ENCODE measurements at regions of chr17 and their contacts with region 1.

Region 1: DNA sequence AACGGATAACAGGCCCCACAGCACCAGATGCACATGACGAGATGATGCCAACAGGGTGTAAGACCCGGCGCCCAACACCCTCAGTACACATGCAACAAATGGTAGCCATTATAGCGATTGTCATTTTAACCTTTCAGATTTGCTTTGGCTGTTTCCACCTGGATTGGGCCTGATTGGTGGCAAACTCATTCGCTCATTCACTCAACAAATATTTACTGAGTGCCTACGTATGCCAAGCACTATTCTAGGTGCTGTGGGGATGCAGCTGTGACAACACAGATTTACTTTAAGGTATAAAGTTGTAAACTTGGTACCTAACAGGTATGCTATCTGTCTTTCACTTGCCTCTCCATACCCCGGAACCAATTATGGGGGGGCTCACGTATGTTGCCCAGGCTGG is 66.8 kb downstream of the SRCIN1 start:
- DNase-seq: no peak
- H3K4me3 Mint-ChIP-seq: no peak overlapping the region
- H3K27ac Mint-ChIP-seq: no peak overlapping the region
- H3K4me1 Mint-ChIP-seq: no peaks in the 10 kb centered on the region
- H3K27me3 Mint-ChIP-seq: peaks cover 31% of the 10 kb centered on the region

Region 2: GRCh38 chr17:38498186-38498752 is 40.6 kb before region 1 on chr17:
- CTCF ChIA-PET with region 1: interaction called, 14 read pairs
- POLR2A ChIA-PET with region 1: no interaction called
- intact Hi-C with region 1: no loop called
- DNase-seq: no peak
- H3K4me3 Mint-ChIP-seq: no peak overlapping the region
- H3K27ac Mint-ChIP-seq: no peak overlapping the region
- H3K4me1 Mint-ChIP-seq: no peaks in the 10 kb centered on the region
- H3K27me3 Mint-ChIP-seq: peaks cover 2% of the 10 kb centered on the region

Region 3: DNA sequence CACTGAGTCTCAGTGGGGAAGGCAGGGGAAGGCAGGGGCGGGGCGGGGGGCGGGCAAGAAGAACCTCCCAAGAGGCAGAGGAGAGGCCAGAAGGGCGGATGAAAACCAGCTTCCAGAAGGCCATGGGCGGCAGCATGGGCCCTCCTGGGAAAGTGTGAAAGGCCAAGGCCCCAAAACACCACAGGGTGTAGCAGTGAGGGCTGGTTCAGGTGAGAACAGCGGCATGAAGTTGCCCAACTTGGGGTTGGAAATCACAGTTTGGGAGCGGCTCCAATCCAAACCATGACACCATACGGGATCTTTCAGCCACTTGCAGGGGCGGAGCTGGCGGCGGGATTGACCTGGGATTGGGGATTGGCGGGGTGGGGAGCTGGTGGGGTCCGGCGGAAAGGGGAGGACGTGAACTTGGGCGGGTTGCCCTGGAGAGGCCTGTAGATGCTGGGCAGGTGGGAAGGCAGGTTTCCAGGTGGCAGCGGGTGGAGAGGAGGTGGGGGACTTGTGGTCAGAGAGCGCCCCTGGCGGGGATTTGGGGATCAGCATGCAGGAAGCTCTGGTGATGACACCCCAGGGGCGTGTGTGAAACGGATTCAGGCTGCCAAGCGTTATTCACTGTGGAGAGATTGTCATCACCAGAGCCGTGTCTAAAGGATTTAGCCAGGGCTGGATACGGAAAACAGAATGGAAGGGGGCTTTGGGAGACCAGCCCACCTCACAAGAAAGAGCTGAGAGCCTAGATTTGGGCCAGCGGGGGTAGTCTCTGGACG is 29.7 kb before region 1 on chr17:
- CTCF ChIA-PET with region 1: interaction called, 10 read pairs
- POLR2A ChIA-PET with region 1: no interaction called
- intact Hi-C with region 1: no loop called
- DNase-seq: peak; percentile 87
- H3K4me3 Mint-ChIP-seq: peak overlapping the region; percentile 71
- H3K27ac Mint-ChIP-seq: no peak overlapping the region
- H3K4me1 Mint-ChIP-seq: peaks cover 9% of the 10 kb centered on the region
- H3K27me3 Mint-ChIP-seq: peaks cover 39% of the 10 kb centered on the region

Region 4: GRCh38 chr17:38595892-38596291 is 57.0 kb after region 1 on chr17:
- CTCF ChIA-PET with region 1: no interaction called
- POLR2A ChIA-PET with region 1: no interaction called
- intact Hi-C with region 1: no loop called
- DNase-seq: no peak
- H3K4me3 Mint-ChIP-seq: no peak overlapping the region
- H3K27ac Mint-ChIP-seq: no peak overlapping the region
- H3K4me1 Mint-ChIP-seq: peaks cover 18% of the 10 kb centered on the region
- H3K27me3 Mint-ChIP-seq: peaks cover 63% of the 10 kb centered on the region

Region 5: DNA sequence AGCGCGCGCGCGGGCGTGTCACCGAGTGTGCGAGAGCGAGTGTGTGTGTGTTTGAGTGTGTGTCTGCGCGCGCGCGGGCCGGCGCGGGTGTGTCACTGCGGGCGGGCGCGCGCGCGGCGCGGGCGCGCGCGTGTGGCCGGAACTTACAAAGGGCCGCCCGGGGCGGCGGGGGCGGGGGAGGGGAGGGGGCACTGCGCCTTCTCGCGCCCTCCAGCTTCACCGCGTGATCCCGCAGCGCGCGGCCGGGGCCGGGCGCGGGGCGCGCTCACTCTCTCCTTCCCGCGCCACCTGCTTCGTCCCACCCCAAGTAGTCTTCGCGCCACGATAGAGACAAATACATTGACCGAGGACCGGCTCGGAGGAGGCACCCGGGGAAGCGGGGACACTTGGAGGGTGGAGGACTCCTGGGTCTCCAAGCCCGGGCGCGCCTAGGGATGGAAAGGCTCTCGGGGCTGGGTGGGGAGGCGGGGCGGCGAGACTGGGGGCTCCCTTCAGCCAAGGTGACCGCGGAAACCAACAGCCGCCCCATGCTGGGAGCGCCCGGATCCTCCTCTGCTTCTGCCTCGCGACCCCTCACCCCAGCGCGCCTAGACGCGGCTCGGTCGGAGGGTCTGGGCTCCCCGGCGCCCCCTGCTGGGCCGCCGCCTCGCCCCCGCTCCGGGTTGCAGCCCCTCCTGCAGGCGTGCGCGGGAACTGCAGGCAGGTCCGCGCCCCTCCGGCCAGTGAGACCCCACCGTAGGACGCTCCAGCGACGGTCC is 67.2 kb after region 1 on chr17 and contains the start of gene SRCIN1:
- CTCF ChIA-PET with region 1: no interaction called
- POLR2A ChIA-PET with region 1: no interaction called
- intact Hi-C with region 1: no loop called
- DNase-seq: peak; percentile 70
- H3K4me3 Mint-ChIP-seq: peak within 1 kb of the TSS; percentile 65
- H3K27ac Mint-ChIP-seq: no peak within 1 kb of the TSS
- H3K4me1 Mint-ChIP-seq: peaks cover 9% of the 10 kb centered on the region
- H3K27me3 Mint-ChIP-seq: peaks cover 69% of the 10 kb centered on the region
- total RNA-seq, gene SRCIN1: 0.92 to 1.6 TPM